ENCODE measurements at regions of chr14 and their contacts with region 1.

Region 1: DNA sequence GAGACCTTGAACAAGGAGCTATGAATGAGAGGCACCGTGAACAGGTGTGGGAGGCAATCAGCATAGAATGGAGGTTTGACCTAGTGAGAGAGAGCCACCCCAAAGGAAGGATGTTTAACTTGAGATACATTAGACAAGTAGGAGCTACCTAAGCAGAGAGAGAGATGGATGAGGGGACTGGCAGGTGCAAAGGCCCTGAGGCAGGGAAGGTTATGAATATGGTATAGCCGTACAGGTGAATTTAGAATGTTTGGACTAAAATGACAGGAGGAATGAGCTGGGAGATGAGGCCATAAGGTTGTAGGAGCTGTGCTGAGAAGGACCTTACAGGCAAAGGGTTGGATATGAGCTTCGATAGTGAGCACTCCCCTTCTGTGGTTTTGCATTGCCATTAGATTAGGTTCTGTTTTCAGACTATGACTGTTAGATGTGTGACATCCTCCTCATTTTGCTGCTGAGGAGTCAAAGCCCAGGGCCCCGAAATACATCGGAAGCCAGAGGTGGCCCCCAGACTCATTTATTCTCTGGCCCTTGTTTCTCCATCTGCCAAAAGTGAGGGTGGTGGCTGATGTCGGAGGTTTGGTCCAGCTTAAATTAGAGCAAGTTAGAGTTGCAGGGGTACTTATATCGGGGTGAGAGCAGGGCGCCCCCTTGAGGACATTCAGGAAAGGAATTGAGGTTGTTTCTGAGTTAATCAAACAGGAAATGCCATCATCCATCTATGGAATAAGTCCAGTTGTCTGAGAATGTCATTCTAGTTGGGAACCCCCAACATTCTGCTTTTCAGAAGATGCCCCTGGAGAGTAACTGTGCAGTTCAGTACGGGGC is 29.4 kb downstream of the SLC24A4 start:
- DNase-seq: peak; percentile 77
- ATAC-seq: peak; percentile 51
- H3K4me3 Mint-ChIP-seq: no peak overlapping the region
- H3K27ac Mint-ChIP-seq: no peak overlapping the region
- H3K4me1 Mint-ChIP-seq: peaks cover 8% of the 10 kb centered on the region
- H3K27me3 Mint-ChIP-seq: peaks cover 13% of the 10 kb centered on the region
- CTCF ChIP-seq: peak; percentile 66

Region 2: GRCh38 chr14:92340931-92341330 is 11.4 kb before region 1 on chr14:
- CTCF ChIA-PET with region 1: interaction called, 13 read pairs
- POLR2A ChIA-PET with region 1: interaction called, 4 read pairs
- intact Hi-C with region 1: no loop called
- DNase-seq: peak; percentile 42
- ATAC-seq: peak; percentile 14
- H3K4me3 Mint-ChIP-seq: no peak overlapping the region
- H3K27ac Mint-ChIP-seq: peak overlapping the region; percentile 49
- H3K4me1 Mint-ChIP-seq: peaks cover 24% of the 10 kb centered on the region
- H3K27me3 Mint-ChIP-seq: peaks cover 37% of the 10 kb centered on the region
- CTCF ChIP-seq: no peak

Measured in activated CD8-positive, alpha-beta T cell treated with anti-CD3 and anti-CD28 coated beads for 36 hours (primary cell).